GM10248 (cell line): ENCODE measurements at regions of chr17 and their contacts with region 1.

Region 1: DNA sequence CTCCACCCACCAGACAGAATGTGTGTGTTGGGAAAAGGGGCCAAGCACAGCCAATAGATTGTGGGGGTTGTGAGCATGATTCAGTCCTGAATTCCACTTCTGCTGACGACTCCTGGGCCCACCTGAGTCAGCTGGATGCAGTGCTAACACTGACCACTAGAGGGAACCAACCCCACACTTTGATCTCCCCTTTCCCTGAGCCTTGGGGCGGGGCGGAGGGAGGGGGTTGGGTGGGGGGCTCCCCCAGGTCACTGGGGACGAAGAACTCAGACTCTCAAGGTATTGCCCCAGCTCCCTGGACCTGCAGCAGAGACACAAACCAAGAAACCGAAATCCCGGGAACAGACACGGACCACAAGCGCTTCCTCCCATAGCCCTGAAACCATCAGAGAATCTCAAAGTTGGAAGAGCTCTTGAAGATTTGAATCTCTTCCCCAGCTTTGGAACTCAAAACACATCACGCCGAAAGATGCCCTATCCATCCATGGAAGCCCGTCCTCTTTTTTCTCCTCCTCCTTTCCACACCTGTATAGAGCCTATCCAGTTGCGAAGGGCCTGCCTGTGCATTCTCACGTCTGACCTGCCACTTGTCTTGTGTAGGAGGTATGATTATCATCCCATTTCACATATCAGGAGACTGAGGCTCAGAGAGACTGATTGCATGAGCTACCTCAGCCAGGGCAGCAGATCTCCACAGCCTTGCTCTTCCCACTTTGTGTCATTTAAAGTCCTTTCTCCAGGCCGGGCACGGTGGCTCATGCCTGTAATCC is 784 bp upstream of the CSHL1 start:
- DNase-seq: peak; percentile 76
- CTCF ChIP-seq: peak; percentile 79

Region 2: DNA sequence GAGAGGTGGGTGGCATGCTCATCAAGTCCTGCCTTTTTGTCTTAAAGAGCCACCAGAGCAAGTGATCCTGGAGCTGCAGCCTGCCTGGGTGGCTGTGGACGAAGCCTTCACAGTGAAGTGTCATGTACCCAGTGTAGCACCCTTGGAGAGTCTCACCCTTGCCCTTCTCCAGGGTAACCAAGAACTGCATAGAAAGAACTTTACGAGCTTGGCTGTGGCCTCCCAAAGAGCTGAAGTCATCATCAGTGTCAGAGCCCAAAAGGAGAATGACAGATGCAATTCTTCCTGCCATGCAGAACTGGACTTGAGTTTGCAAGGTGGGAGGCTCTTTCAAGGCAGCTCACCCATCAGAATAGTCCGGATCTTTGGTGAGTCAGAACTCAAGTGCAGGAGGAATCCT is 52.6 kb before region 1 on chr17:
- CTCF ChIA-PET with region 1: no interaction called
- POLR2A ChIA-PET with region 1: no interaction called
- DNase-seq: no peak
- CTCF ChIP-seq: no peak

Region 3: DNA sequence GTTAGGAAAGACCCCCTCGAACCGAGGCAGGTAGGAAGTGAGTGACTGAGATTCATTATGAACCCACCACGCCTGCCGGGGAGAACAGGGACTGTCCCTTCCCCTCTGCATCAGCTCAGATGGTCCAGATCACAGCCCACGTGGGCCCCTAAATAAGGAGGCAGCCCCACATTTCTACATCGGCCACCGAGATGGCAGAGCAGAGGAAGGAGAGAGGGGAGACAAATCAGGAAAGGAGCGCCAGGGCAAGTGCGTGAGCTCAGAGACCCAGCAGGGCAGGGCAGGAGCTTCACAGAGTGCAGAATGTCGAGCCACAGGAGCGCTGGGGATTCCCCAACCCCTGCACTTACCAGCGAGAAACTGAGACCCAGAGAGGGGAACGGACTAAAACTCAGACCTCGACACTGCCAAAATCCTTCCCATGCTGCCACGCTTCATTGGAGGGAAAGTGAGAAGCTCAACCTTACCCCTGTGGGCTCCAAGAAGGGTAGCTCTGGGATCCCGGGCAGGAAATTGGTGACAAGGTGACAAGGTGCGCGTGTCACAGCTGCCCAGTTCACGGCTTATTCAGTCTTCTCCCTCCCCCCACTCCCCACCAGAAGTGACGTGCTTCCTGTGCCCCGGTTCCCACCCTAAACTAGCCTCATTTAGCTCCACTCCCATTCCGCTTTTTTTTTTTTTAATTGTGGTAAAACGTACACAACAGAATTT is 108.4 kb after region 1 on chr17 and contains the start of gene ICAM2:
- CTCF ChIA-PET with region 1: interaction called, 160 read pairs
- POLR2A ChIA-PET with region 1: no interaction called
- DNase-seq: peak; percentile 70
- CTCF ChIP-seq: no peak